ENCODE measurements at regions of chr1 and their contacts with region 1.

Region 1: DNA sequence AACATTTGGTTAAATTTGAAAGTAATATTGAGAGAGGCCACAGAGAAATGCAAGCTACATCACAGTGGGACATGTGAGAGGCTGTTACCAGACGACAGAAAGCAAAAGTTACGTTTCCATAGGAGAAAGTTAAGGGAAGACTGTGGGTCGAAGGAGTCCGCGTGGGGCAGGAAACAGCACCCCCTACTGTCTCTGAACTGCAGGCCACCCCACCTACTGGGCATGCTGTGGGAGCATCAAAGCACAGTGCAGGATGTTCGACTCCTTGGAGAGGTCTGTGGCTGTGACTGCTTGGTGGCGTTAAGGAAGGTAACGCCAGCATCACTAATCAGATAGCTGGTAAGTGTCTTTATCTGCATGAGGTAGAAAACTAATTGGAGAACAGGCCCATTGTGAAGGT is 123.9 kb downstream of the PTBP2 start:
- DNase-seq: peak in 3 of 10 donors; percentile 13 to 46 (median 42)
- H3K4me3 ChIP-seq: no peak overlapping the region
- H3K27ac ChIP-seq: no peak overlapping the region
- H3K27me3 ChIP-seq: no peaks in the 10 kb centered on the region
- CTCF ChIP-seq: peak in 53 of 56 donors; percentile 21 to 78 (median 54)

Region 2: DNA sequence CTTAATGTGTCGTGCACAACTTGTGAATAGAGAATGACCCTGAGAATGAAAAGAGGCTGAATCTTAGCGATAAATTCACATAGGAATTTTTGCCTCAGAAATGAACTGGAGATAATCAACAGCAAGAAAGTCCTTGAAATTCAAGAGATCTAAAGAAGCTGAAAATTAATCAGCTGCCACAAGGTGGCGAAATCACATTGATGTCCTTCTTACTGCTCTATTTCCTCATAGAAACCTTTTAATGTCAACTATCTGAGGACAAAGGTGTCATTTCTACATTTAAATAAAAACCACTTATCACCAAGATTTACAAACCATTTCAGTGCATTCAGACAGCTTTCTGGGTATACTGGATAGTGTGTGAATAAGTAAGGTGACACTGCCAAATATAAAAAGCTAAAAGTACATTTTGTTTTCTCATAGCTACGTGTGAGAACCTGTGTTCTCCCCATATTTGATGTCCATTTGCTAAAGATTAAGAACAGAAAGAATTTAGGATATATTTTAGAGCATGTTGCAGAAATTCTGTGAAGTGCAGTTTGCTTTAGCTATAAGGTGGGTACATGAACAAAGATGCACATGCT is 609.2 kb before region 1 on chr1:
- intact Hi-C with region 1: loop called in 1 of 2 experiments (anchors 5 kb)
- DNase-seq: peak in 3 of 10 donors; percentile 10 to 55 (median 10)
- H3K4me3 ChIP-seq: no peak overlapping the region
- H3K27ac ChIP-seq: no peak overlapping the region
- H3K27me3 ChIP-seq: no peaks in the 10 kb centered on the region
- CTCF ChIP-seq: peak; percentile 46 to 83 (median 70)

Region 3: GRCh38 chr1:97094280-97094972 is 249.0 kb after region 1 on chr1:
- intact Hi-C with region 1: no loop called
- DNase-seq: no peak
- H3K4me3 ChIP-seq: no peak overlapping the region
- H3K27ac ChIP-seq: no peak overlapping the region
- H3K27me3 ChIP-seq: no peaks in the 10 kb centered on the region
- CTCF ChIP-seq: no peak

Measured in dorsolateral prefrontal cortex (tissue), 120 donors.